ENCODE measurements at regions of chr12 and their contacts with region 1.

Region 1: DNA sequence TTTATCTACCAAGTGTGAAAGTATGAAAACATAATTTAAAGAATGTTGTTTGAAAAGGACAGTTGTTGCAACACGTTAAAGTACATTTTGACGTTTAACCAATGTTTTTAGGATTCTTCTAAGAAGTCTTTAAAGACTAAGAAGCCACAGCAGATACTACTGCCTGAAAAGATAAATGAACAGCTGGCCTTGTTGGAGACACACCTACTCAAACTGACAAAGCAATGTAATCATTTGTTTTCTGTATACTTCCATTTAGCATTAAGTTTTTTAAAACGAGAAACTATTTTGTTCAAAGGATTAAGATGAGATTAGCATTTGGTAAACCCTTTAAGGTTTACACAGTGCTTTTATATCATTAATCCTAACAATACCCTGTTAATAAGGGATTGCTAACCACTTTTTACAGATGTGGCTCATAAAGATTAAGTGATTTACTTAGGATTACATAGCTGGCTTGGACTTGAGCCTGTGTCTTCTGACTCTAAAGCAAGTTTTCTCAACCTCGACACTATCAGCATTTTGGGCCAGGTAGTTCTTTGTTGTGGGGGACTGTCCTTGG is 134.4 kb downstream of the CFAP54 start:
- DNase-seq: no peak
- H3K4me3 ChIP-seq: no peak overlapping the region
- H3K27ac ChIP-seq: no peak overlapping the region
- H3K27me3 ChIP-seq: no peaks in the 10 kb centered on the region
- CTCF ChIP-seq: no peak

Region 2: GRCh38 chr12:96570579-96570978 is 53.2 kb before region 1 on chr12:
- intact Hi-C with region 1: no loop called
- DNase-seq: no peak
- H3K4me3 ChIP-seq: no peak overlapping the region
- H3K27ac ChIP-seq: no peak overlapping the region
- H3K27me3 ChIP-seq: no peaks in the 10 kb centered on the region
- CTCF ChIP-seq: no peak

Region 3: GRCh38 chr12:96670334-96670899 is 46.7 kb after region 1 on chr12:
- intact Hi-C with region 1: no loop called
- DNase-seq: no peak
- H3K4me3 ChIP-seq: no peak overlapping the region
- H3K27ac ChIP-seq: no peak overlapping the region
- H3K27me3 ChIP-seq: no peaks in the 10 kb centered on the region
- CTCF ChIP-seq: no peak

Region 4: GRCh38 chr12:96687719-96688118 is 64.0 kb after region 1 on chr12:
- intact Hi-C with region 1: loop called in 1 of 2 experiments (anchors 2 kb)
- DNase-seq: no peak
- H3K4me3 ChIP-seq: no peak overlapping the region
- H3K27ac ChIP-seq: no peak overlapping the region
- H3K27me3 ChIP-seq: peaks cover 0 to 2% (median 0%) of the 10 kb centered on the region in 45 donors
- CTCF ChIP-seq: no peak